ENCODE measurements at regions of chr17 and their contacts with region 1.

Region 1: DNA sequence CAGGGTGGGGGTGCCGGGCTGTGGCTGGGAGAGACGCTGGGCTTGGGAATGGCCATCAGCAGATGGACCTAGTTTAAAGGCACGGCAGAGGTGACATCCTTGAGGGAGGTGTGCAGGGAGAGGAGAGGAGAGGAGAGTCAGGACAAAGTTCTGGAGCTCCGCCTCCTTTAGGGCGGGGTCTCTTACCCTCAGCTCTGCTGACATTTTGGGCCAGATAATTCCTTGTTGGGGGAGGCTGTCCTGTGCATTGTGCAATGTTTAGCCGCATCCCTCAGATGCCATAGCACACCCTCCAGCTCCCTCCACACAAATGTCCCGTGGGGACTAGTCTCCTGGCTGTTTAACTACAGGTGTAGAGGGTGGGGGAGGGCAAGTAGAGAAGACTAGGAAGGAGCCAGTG is 48.3 kb downstream of the ARHGAP23 start:
- DNase-seq: no peak
- H3K4me3 ChIP-seq: no peak overlapping the region
- H3K27ac ChIP-seq: no peak overlapping the region; the same call in 1 of the 2 replicates
- H3K4me1 ChIP-seq: no peaks in the 10 kb centered on the region
- H3K27me3 ChIP-seq: no peaks in the 10 kb centered on the region
- CTCF ChIP-seq: no peak
- EP300 ChIP-seq: no peak
- POLR2A ChIP-seq: no peak
- RAD21 ChIP-seq: no peak

Region 2: GRCh38 chr17:38379438-38379837 is 97.1 kb before region 1 on chr17:
- CTCF ChIA-PET with region 1: no interaction called
- POLR2A ChIA-PET with region 1: no interaction called
- DNase-seq: no peak
- H3K4me3 ChIP-seq: no peak overlapping the region
- H3K27ac ChIP-seq: no peak overlapping the region
- H3K4me1 ChIP-seq: no peaks in the 10 kb centered on the region
- H3K27me3 ChIP-seq: no peaks in the 10 kb centered on the region
- CTCF ChIP-seq: no peak
- EP300 ChIP-seq: no peak
- POLR2A ChIP-seq: no peak
- RAD21 ChIP-seq: no peak

Region 3: DNA sequence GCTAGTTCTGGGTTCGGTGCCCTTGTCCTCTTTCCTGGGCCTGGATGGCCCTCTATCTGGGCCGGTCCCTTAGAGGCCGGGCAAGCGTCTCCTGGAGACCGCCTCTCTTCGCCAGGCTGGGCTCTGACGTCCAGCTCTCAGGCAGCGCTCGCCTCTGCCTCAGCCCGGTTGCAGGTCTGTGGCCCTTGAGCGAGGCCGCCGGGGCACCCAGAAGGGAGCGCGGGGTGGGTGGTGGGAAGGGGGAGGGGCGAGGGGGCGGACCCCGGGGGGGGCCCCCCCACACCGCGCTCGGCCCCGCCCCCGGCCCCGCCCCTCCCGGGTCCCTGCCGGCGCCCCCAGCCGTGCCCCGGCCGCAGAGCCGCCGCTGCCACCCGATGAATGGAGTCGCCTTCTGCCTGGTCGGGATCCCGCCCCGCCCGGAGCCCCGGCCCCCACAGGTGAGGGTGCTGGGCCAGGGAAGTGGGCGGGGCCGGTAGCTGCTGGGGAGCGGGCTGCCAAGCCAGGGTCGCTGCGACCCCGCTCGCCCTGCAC is 48.4 kb before region 1 on chr17 and contains the start of gene ARHGAP23:
- CTCF ChIA-PET with region 1: interaction called, 42 read pairs
- POLR2A ChIA-PET with region 1: interaction called, 8 read pairs
- DNase-seq: peak in 1 of 2 experiments; percentile 67
- H3K4me3 ChIP-seq: peak within 1 kb of the TSS; percentile 66 to 91 (median 72)
- H3K27ac ChIP-seq: no peak within 1 kb of the TSS; the same call in 1 of the 2 replicates
- H3K4me1 ChIP-seq: peaks cover 22 to 35% (median 25%) of the 10 kb centered on the region in 4 experiments
- H3K27me3 ChIP-seq: no peaks in the 10 kb centered on the region
- CTCF ChIP-seq: no peak
- EP300 ChIP-seq: no peak
- POLR2A ChIP-seq: no peak
- RAD21 ChIP-seq: peak in 1 of 2 experiments; percentile 1; a peak in 1 of 4 replicates
- total RNA-seq, gene ARHGAP23: 107 and 108 TPM in 2 replicates

Region 4: DNA sequence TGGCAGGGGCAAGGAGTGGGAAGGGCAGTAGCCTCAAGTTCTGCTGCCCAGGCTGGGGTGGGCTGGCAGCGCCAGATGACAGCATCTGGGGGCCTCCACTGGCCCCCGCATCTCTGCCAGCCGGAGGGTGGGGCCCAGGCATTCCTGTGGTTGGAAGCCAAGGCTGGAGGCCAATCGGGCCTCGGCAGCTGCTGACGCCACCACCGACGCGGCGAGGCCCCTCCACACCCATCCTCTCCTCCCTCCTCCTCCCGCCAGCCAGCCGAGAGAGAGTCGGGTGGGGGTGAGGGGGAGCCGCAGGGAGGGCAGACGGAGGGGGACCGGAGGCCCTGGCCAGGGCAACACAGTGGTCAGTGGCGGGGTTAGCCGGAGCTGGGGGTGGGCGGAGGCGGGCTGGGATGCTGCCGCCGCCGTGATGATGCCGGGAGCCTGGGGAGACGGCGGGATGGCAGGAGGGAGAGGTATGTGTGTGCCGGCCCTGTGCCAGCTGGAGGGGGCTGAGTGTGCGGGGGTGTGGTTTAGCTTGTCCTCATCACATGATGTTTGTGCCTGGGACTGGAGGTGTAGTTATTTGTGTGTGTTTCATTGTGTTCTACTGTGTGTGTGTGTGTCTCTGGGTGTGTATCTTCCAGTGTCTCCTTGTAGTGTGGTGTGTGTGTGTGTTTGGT is 11.7 kb before region 1 on chr17:
- CTCF ChIA-PET with region 1: interaction called, 5 read pairs
- POLR2A ChIA-PET with region 1: interaction called, 10 read pairs
- DNase-seq: no peak
- H3K4me3 ChIP-seq: no peak overlapping the region
- H3K27ac ChIP-seq: peak overlapping the region; percentile 54
- H3K4me1 ChIP-seq: peaks cover 0 to 8% (median 1%) of the 10 kb centered on the region in 4 experiments; a peak in 4 of 7 replicates
- H3K27me3 ChIP-seq: no peaks in the 10 kb centered on the region
- CTCF ChIP-seq: no peak
- EP300 ChIP-seq: no peak
- POLR2A ChIP-seq: no peak
- RAD21 ChIP-seq: no peak

Region 5: GRCh38 chr17:38498186-38498752 is 21.7 kb after region 1 on chr17:
- CTCF ChIA-PET with region 1: no interaction called
- POLR2A ChIA-PET with region 1: no interaction called
- DNase-seq: no peak
- H3K4me3 ChIP-seq: no peak overlapping the region
- H3K27ac ChIP-seq: no peak overlapping the region
- H3K4me1 ChIP-seq: no peaks in the 10 kb centered on the region; a peak in 1 of 7 replicates
- H3K27me3 ChIP-seq: no peaks in the 10 kb centered on the region
- CTCF ChIP-seq: peak; percentile 20 to 40 (median 32); a peak in 3 of 4 replicates
- EP300 ChIP-seq: no peak
- POLR2A ChIP-seq: no peak
- RAD21 ChIP-seq: peak in 1 of 2 experiments; percentile 17; a peak in 1 of 4 replicates